Natural killer cell (primary cell): ENCODE measurements at regions of chr11 and their contacts with region 1.

Region 1: GRCh38 chr11:34105079-34105956 is at the start of gene NAT10:
- DNase-seq: peak; percentile 96 to 100
- ATAC-seq: peak; percentile 93 to 98 (median 94)
- H3K4me3 ChIP-seq: peak within 1 kb of the TSS; percentile 82
- H3K4me3 Mint-ChIP-seq: peak within 1 kb of the TSS; percentile 96
- H3K27ac ChIP-seq: peak within 1 kb of the TSS; percentile 94
- H3K27ac Mint-ChIP-seq: peak within 1 kb of the TSS; percentile 96 to 97
- H3K4me1 ChIP-seq: peaks cover 16% of the 10 kb centered on the region
- H3K4me1 Mint-ChIP-seq: peaks cover 34 to 40% of the 10 kb centered on the region in 2 donors
- H3K27me3 ChIP-seq: no peaks in the 10 kb centered on the region
- H3K27me3 Mint-ChIP-seq: no peaks in the 10 kb centered on the region
- CTCF ChIP-seq: no peak
- total RNA-seq, gene NAT10: 40.3 to 53.6 (median 42.8) TPM

Region 2: GRCh38 chr11:33996498-33997454 is 108.5 kb before region 1 on chr11:
- intact Hi-C with region 1: loop called (anchors 2 kb)
- DNase-seq: peak; percentile 48 to 86
- ATAC-seq: peak; percentile 93 to 100 (median 100)
- H3K4me3 ChIP-seq: no peak overlapping the region
- H3K4me3 Mint-ChIP-seq: no peak overlapping the region
- H3K27ac ChIP-seq: no peak overlapping the region
- H3K27ac Mint-ChIP-seq: no peak overlapping the region
- H3K4me1 ChIP-seq: peaks cover 5% of the 10 kb centered on the region
- H3K4me1 Mint-ChIP-seq: peaks cover 7 to 10% of the 10 kb centered on the region in 2 donors
- H3K27me3 ChIP-seq: peaks cover 11% of the 10 kb centered on the region
- H3K27me3 Mint-ChIP-seq: peaks cover 19 to 22% of the 10 kb centered on the region in 2 donors
- CTCF ChIP-seq: peak; percentile 74

Region 3: DNA sequence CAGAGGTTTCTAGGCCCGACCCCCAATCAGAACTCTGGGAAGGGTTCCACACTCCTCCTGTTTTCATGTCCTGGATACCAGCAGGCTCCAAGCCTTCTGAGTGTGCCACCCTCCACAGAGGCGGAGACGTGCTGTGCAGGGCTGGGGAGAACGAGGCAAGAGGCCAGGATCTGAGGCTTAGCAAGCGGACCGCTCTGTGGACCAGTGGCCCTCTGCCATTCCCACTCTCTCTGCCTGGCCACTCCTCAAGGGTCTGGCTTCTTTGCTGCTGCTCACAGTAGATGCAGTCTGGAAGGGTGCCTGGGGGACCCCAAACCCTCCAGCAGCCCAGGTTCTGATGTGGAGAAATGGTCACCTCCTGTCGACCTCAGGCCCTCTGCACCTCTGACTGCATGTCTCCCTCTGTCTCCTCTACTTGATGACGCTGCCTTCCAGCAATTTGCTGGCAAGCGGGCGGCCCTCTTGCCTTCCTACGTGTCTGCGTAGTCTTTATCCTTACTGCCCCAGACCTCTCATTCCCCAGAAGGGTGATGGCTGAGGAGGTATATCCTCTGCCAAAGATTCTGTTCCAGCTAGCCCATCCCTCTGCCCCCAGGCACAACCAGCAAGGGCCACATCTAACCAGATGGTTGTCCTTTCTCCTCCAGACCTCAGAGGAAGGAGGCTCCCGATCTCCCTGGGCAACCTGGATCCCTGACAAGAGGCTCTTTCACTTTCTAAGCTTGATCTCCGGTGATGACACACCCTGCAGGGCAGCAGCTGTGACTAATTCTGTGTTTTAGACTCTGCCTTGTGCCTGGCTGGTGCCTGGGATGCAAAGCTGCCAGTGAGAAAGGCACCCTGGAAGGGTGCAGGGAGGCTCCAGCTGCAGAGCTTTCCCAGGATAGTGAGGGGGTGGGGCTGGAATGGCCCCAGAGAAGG is 87.4 kb after region 1 on chr11:
- intact Hi-C with region 1: no loop called
- DNase-seq: no peak
- ATAC-seq: no peak
- H3K4me3 ChIP-seq: no peak overlapping the region
- H3K4me3 Mint-ChIP-seq: no peak overlapping the region
- H3K27ac ChIP-seq: no peak overlapping the region
- H3K27ac Mint-ChIP-seq: no peak overlapping the region
- H3K4me1 ChIP-seq: peaks cover 8% of the 10 kb centered on the region
- H3K4me1 Mint-ChIP-seq: peaks cover 9% of the 10 kb centered on the region in 2 donors
- H3K27me3 ChIP-seq: no peaks in the 10 kb centered on the region
- H3K27me3 Mint-ChIP-seq: no peaks in the 10 kb centered on the region
- CTCF ChIP-seq: no peak

Region 4: GRCh38 chr11:34438529-34439507 is 333.5 kb after region 1 on chr11 and contains the start of gene CAT:
- intact Hi-C with region 1: loop called (anchors 2 kb)
- DNase-seq: peak; percentile 97
- ATAC-seq: peak; percentile 94 to 98 (median 95)
- H3K4me3 ChIP-seq: peak within 1 kb of the TSS; percentile 67
- H3K4me3 Mint-ChIP-seq: peak within 1 kb of the TSS; percentile 95
- H3K27ac ChIP-seq: peak within 1 kb of the TSS; percentile 69
- H3K27ac Mint-ChIP-seq: peak within 1 kb of the TSS; percentile 91 to 98
- H3K4me1 ChIP-seq: peaks cover 11% of the 10 kb centered on the region
- H3K4me1 Mint-ChIP-seq: peaks cover 30 to 36% of the 10 kb centered on the region in 2 donors
- H3K27me3 ChIP-seq: no peaks in the 10 kb centered on the region
- H3K27me3 Mint-ChIP-seq: no peaks in the 10 kb centered on the region
- CTCF ChIP-seq: no peak
- total RNA-seq, gene CAT: 31.0 to 43.9 (median 36.3) TPM

Region 5: GRCh38 chr11:34916015-34916842 is 810.9 kb after region 1 on chr11 and contains the starts of genes APIP and PDHX:
- intact Hi-C with region 1: loop called (anchors 2 kb)
- DNase-seq: peak; percentile 88 to 94
- ATAC-seq: peak; percentile 86 to 94 (median 91)
- H3K4me3 ChIP-seq: peak within 1 kb of the TSS; percentile 96
- H3K4me3 Mint-ChIP-seq: peak within 1 kb of the TSS; percentile 97
- H3K27ac ChIP-seq: peak within 1 kb of the TSS; percentile 90
- H3K27ac Mint-ChIP-seq: peak within 1 kb of the TSS; percentile 95 to 98
- H3K4me1 ChIP-seq: peaks cover 14% of the 10 kb centered on the region
- H3K4me1 Mint-ChIP-seq: peaks cover 41% of the 10 kb centered on the region in 2 donors
- H3K27me3 ChIP-seq: no peaks in the 10 kb centered on the region
- H3K27me3 Mint-ChIP-seq: no peaks in the 10 kb centered on the region
- CTCF ChIP-seq: no peak
- total RNA-seq, gene APIP: 6.6 to 9.4 (median 8.1) TPM
- total RNA-seq, gene PDHX: 18.3 to 27.1 (median 20.9) TPM